ENCODE measurements at regions of chr10 and their contacts with region 1.

Region 1: GRCh38 chr10:75717126-75717916 is 285.9 kb downstream of the LRMDA start:
- DNase-seq: no peak

Region 2: DNA sequence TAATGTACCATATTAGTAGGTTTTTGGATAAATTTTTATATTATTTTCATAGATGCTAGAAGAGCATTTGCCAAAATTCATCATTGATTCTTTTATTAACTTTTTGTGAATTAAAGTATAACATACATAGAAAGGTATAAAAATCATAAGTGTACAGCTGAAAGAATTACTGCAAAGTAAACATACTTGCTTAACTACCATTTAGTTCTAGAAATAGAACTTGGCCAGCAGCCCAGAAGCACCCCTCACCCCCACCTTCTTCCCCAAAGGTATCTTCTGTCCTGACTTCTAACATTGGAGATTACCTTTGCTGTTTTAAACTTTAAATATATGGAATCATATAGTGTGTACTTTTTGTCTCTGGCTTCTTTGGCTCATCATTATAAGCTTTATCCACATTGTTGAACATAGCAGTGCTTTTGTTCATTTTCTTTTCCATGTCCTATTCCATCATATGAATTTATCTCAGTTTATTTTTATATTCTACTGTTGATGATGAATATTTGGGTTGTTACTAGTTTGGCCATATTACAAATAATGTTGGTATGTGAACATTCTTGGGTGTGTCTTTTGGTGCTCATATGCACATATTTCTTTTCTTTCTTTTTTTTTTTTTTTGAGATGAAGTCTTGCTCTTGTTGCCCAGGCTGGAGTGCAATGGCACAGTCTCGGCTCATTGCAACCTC is 1423.5 kb before region 1 on chr10:
- intact Hi-C with region 1: no loop called
- DNase-seq: no peak

Region 3: DNA sequence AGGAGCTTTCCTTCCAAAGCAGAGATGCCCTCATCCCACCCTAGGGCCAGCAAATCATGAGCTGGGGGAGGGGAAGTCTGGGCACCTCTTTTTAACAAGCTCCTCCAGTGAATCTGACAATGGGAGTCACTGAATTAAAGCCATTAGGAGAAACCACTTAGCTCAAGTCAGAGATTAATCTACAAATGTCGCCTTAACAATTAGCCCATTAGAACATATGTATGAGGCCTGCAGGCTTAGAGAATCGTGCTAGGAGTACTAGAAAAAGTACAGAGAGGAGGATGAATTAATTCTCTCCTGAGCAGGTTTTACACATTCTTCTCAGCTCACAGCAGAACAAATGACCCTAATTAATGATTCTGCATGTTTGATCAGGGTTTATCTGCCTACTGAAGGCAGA is 1539.0 kb after region 1 on chr10:
- intact Hi-C with region 1: loop called in 1 of 2 experiments (anchors 5 kb)
- DNase-seq: no peak